ENCODE measurements at regions of chrX and their contacts with region 1.

Region 1: DNA sequence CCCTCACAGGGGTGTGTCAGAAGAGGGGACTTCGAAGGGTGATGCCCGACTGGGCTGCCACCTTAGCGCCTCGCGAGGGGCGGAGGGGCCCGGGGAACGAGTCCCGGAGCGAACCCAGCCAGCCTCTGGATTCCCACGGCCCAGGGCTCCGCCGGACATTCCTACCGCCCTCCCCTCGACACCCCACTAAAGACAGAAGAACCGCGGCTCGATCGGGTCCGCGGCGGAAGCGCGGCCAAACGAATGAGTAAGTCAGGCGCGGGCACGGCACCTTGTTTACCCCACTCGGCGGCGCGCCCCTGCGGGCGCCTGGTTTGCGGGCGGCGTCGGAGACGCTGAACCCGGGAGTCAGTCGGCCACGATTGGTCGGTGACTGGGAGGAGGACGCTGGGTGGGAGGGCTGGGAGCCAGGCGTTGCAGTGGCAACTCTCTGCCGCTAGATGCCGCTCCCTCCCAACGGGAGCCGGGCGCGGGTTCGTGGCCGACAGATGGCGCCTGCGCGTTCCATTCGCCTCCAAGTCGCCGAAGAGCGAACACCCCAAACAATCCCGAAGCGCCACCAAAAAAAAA is 1.4 kb upstream of the STAG2 start:
- DNase-seq: peak; percentile 94
- ATAC-seq: peak; percentile 68
- H3K4me3 Mint-ChIP-seq: peak overlapping the region; percentile 93
- H3K27ac Mint-ChIP-seq: peak overlapping the region; percentile 100
- H3K4me1 Mint-ChIP-seq: peaks cover 14% of the 10 kb centered on the region
- H3K27me3 Mint-ChIP-seq: no peaks in the 10 kb centered on the region

Region 2: DNA sequence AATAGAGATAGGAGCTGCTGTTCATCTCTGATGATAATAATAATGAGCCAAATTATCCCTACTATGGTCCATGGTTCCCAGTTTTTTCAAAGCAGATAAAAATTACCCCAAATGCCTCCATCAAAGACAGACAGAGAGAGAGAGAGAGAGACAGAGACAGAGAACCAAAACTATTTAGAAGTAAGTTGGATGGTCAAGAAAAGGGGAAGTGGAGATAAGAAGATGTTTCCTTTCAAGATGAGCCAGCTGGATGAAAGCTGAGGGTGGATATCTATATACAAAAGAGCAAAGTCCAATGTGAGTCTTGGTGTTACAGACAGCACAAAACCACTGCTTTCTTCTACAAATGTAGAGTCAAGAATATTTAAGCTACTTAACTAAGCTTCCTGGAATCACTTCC is 602.2 kb before region 1 on chrX:
- CTCF ChIA-PET with region 1: no interaction called
- POLR2A ChIA-PET with region 1: no interaction called
- intact Hi-C with region 1: no loop called
- DNase-seq: no peak
- ATAC-seq: no peak
- H3K4me3 Mint-ChIP-seq: no peak overlapping the region
- H3K27ac Mint-ChIP-seq: no peak overlapping the region
- H3K4me1 Mint-ChIP-seq: no peaks in the 10 kb centered on the region
- H3K27me3 Mint-ChIP-seq: no peaks in the 10 kb centered on the region

Region 3: DNA sequence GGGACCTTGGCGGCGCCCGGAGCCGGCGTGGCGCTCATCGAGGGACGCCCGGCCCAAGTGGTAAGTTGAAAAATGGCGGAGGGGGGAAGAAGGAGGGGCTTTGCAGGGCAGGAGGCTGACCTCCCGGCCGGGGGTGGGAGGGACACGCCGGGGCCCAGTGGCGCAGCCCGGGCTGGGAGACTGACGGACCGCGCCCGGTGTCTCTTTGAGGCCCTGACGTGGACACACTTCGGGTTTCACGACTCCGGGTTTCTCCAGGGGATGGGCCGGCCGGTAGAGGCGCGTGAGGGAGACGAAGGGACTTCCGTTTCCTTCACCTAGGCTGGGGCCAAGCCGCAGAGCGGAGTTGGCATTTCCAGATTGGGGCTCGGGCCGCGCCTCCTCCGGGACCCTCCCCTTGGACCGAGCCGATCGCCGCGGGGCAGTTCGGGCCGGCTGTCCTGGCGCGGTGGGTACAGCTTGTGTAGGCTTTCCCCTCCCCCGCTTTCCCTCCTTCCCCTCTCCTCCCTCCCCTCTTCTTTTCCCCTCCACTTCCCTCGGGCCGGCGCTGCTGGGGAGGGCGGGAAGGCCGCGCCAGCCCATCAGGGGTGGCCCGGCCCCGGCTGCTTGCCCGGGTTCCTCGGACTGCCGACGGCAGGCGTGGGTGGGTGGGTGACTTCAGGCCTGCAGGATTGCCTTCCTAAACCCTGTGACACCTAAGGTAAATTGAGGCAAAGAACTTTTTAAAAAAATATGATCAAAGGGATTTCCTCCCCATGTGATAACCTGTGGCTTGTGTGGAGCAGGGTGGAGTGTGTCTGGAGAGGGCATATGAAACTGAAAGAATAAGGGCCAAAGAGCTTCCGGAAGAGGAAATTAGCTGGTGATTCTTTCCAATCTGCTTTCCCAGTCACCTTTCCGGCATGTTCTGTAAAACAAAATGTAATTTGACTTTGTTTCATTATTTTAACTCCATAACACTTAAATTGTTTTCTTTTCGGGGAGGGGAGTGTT is 100.0 kb before region 1 on chrX and contains the start of gene XIAP:
- CTCF ChIA-PET with region 1: no interaction called
- POLR2A ChIA-PET with region 1: no interaction called
- intact Hi-C with region 1: loop called in 1 of 2 experiments (anchors 1 kb)
- DNase-seq: peak; percentile 79
- ATAC-seq: peak; percentile 86
- H3K4me3 Mint-ChIP-seq: peak within 1 kb of the TSS; percentile 83
- H3K27ac Mint-ChIP-seq: peak within 1 kb of the TSS; percentile 88
- H3K4me1 Mint-ChIP-seq: peaks cover 11% of the 10 kb centered on the region
- H3K27me3 Mint-ChIP-seq: no peaks in the 10 kb centered on the region
- total RNA-seq, gene XIAP: 22.8 to 27.7 TPM

Region 4: GRCh38 chrX:123976706-123977316 is 16.7 kb after region 1 on chrX:
- CTCF ChIA-PET with region 1: interaction called, 8 read pairs
- POLR2A ChIA-PET with region 1: interaction called, 7 read pairs
- intact Hi-C with region 1: loop called (anchors 2 kb)
- DNase-seq: no peak
- ATAC-seq: peak; percentile 36
- H3K4me3 Mint-ChIP-seq: no peak overlapping the region
- H3K27ac Mint-ChIP-seq: peak overlapping the region; percentile 14
- H3K4me1 Mint-ChIP-seq: peaks cover 44% of the 10 kb centered on the region
- H3K27me3 Mint-ChIP-seq: no peaks in the 10 kb centered on the region

Region 5: GRCh38 chrX:124018023-124018422 is 57.9 kb after region 1 on chrX:
- CTCF ChIA-PET with region 1: interaction called, 6 read pairs
- POLR2A ChIA-PET with region 1: interaction called, 4 read pairs
- intact Hi-C with region 1: loop called (anchors 1 to 5 kb)
- DNase-seq: no peak
- ATAC-seq: no peak
- H3K4me3 Mint-ChIP-seq: no peak overlapping the region
- H3K27ac Mint-ChIP-seq: no peak overlapping the region
- H3K4me1 Mint-ChIP-seq: peaks cover 30% of the 10 kb centered on the region
- H3K27me3 Mint-ChIP-seq: no peaks in the 10 kb centered on the region

Region 6: DNA sequence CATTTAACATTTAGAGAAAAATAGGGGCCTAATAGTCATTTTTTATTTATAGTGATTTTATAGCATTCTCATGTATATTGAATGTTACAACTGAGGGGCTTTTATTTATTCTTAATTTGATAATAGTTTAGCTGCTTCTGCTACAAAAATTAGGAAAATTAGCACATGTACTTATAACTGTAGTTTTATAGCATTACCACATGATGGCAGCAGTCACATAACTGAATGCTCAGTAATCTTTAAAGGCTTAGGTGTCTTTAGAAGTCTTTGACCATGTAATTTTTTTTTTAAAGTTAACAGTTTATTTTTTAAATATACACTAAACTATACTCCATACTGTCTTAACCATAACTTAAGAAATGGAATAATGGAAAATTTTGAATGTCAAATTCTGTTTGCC is 138.0 kb after region 1 on chrX:
- CTCF ChIA-PET with region 1: no interaction called
- POLR2A ChIA-PET with region 1: no interaction called
- intact Hi-C with region 1: no loop called
- DNase-seq: no peak
- ATAC-seq: no peak
- H3K4me3 Mint-ChIP-seq: no peak overlapping the region
- H3K27ac Mint-ChIP-seq: no peak overlapping the region
- H3K4me1 Mint-ChIP-seq: peaks cover 5% of the 10 kb centered on the region
- H3K27me3 Mint-ChIP-seq: no peaks in the 10 kb centered on the region

Region 7: DNA sequence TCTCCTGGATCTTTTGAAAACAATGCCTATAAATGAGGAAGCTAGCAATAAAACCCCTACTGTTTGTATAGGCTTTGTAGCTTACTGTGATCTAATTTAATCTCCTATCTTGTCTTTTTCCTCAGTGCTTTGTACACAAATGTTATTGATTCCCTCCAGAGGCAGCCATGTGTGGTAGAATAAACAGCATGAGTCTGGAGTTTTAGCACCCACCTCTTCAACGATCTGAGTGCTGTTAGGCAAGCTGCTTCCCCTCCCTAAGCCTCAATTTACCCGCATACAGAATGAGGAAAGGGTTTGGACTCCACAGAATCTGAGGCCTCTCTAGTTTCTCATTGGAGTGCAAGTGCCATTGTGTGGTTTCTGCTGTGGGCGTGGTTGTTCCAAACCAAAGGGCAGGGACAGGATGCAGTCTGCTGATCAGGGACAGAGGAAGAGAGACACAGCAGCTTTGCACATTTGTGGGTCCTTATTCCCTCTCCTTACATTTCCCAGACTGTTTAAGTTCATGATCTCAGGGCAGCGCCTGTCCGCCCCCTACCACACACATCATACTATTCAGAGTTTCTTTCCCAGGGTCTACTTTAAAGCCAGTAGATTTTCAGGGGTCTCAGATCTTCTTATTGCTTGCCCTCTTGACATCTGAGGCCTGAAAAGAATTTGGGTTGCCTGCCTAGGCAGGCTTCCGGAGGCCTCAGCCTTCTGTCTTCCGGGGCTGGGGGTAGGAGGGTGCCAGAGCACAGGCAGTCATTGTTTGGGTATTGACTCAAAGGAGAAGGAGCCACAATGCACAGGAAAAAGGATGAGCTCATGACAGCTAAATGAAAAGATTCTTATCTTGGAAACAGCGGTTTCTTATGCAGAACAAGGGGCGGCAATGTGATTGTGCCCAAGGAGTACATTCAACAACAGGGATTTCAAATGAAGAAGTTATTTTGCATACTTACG is 257.5 kb after region 1 on chrX:
- CTCF ChIA-PET with region 1: interaction called, 3 read pairs
- POLR2A ChIA-PET with region 1: interaction called, 3 read pairs
- intact Hi-C with region 1: loop called (anchors 1 to 2 kb)
- DNase-seq: peak; percentile 79
- ATAC-seq: peak; percentile 92
- H3K4me3 Mint-ChIP-seq: peak overlapping the region; percentile 71
- H3K27ac Mint-ChIP-seq: peak overlapping the region; percentile 96
- H3K4me1 Mint-ChIP-seq: peaks cover 85% of the 10 kb centered on the region
- H3K27me3 Mint-ChIP-seq: no peaks in the 10 kb centered on the region

Region 8: DNA sequence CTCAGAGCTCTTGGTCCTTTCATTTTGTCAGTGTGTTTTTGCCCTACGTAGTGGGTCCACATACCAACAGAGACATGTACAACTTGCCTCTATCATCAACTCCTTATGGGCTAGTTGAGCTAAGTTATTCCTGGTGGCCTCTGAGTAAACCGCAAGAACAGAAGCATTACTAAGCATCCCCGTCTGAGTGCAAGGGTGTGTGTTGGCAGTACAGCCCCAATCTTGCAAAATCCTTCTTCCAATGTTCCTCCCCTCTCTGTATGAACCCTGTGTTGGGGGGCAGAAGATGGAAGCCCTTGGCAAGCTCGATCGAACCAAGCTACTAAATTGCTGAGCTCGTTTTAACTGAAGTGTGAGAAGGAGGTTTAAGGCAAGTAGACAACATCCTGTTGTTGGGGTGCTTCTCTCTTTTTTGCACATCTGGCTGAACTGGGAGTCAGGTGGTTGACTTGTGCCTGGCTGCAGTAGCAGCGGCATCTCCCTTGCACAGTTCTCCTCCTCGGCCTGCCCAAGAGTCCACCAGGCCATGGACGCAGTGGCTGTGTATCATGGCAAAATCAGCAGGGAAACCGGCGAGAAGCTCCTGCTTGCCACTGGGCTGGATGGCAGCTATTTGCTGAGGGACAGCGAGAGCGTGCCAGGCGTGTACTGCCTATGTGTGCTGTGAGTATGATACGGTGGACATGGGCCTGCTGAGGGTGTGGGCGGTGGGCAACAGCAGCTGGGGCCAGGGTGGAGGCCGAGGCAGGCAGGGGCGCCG is 386.2 kb after region 1 on chrX and contains the start of gene SH2D1A:
- CTCF ChIA-PET with region 1: no interaction called
- POLR2A ChIA-PET with region 1: no interaction called
- intact Hi-C with region 1: loop called (anchors 2 to 5 kb)
- DNase-seq: peak; percentile 36
- ATAC-seq: peak; percentile 35
- H3K4me3 Mint-ChIP-seq: peak within 1 kb of the TSS; percentile 88
- H3K27ac Mint-ChIP-seq: peak within 1 kb of the TSS; percentile 95
- H3K4me1 Mint-ChIP-seq: peaks cover 46% of the 10 kb centered on the region
- H3K27me3 Mint-ChIP-seq: no peaks in the 10 kb centered on the region
- total RNA-seq, gene SH2D1A: 26.8 to 32.5 TPM